ENCODE measurements at regions of chr5 and their contacts with region 1.

Region 1: GRCh38 chr5:96934708-96935558 is 947 bp upstream of the LNPEP start:
- DNase-seq: peak; percentile 97
- H3K4me3 ChIP-seq: peak overlapping the region; percentile 87
- H3K27ac ChIP-seq: peak overlapping the region; percentile 98
- H3K4me1 ChIP-seq: peaks cover 53% of the 10 kb centered on the region
- CTCF ChIP-seq: no peak

Region 2: GRCh38 chr5:96662725-96663513 is 272.0 kb before region 1 on chr5:
- CTCF ChIA-PET with region 1: no interaction called
- POLR2A ChIA-PET with region 1: no interaction called
- intact Hi-C with region 1: loop called (anchors 2 kb)
- DNase-seq: peak; percentile 89
- H3K4me3 ChIP-seq: peak overlapping the region; percentile 80
- H3K27ac ChIP-seq: peak overlapping the region; percentile 88
- H3K4me1 ChIP-seq: peaks cover 23% of the 10 kb centered on the region
- CTCF ChIP-seq: no peak

Region 3: GRCh38 chr5:96868603-96869371 is 66.1 kb before region 1 on chr5:
- CTCF ChIA-PET with region 1: interaction called, 4 read pairs
- POLR2A ChIA-PET with region 1: interaction called, 19 read pairs
- intact Hi-C with region 1: loop called (anchors 1 kb)
- DNase-seq: peak; percentile 90
- H3K4me3 ChIP-seq: no peak overlapping the region
- H3K27ac ChIP-seq: no peak overlapping the region
- H3K4me1 ChIP-seq: peaks cover 47% of the 10 kb centered on the region
- CTCF ChIP-seq: peak; percentile 100

Region 4: DNA sequence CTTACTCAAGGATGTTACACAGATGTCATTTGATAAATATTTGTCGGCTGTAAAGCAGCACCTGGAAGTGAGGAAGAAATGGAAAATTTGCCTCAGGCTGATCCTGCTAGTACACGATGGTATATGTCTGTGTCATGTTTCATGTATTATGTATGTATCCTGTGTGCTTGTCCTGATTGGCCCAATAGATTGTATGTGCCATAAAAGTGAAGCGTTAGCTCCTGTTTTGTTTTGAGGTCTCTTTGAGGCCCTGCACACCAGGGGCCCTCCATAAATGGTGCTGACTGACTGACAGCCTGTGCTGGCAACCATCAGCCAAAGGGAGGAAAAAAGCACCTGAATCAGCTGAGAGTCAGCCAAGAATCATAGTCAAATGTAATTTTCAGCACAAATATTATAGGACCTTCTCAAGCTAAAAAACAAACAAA is 10.9 kb before region 1 on chr5:
- CTCF ChIA-PET with region 1: no interaction called
- POLR2A ChIA-PET with region 1: interaction called, 28 read pairs
- intact Hi-C with region 1: no loop called
- DNase-seq: peak; percentile 39
- H3K4me3 ChIP-seq: no peak overlapping the region
- H3K27ac ChIP-seq: peak overlapping the region; percentile 53
- H3K4me1 ChIP-seq: peaks cover 54% of the 10 kb centered on the region
- CTCF ChIP-seq: no peak

Region 5: GRCh38 chr5:96963267-96963666 is 28.3 kb after region 1 on chr5:
- CTCF ChIA-PET with region 1: interaction called, 3 read pairs
- POLR2A ChIA-PET with region 1: interaction called, 38 read pairs
- intact Hi-C with region 1: loop called (anchors 1 kb)
- DNase-seq: peak; percentile 75
- H3K4me3 ChIP-seq: peak overlapping the region; percentile 82
- H3K27ac ChIP-seq: peak overlapping the region; percentile 98
- H3K4me1 ChIP-seq: peaks cover 48% of the 10 kb centered on the region
- CTCF ChIP-seq: no peak

Region 6: GRCh38 chr5:97037819-97038218 is 102.9 kb after region 1 on chr5:
- CTCF ChIA-PET with region 1: no interaction called
- POLR2A ChIA-PET with region 1: no interaction called
- intact Hi-C with region 1: no loop called
- DNase-seq: no peak
- H3K4me3 ChIP-seq: no peak overlapping the region
- H3K27ac ChIP-seq: no peak overlapping the region
- H3K4me1 ChIP-seq: no peaks in the 10 kb centered on the region
- CTCF ChIP-seq: no peak

Region 7: DNA sequence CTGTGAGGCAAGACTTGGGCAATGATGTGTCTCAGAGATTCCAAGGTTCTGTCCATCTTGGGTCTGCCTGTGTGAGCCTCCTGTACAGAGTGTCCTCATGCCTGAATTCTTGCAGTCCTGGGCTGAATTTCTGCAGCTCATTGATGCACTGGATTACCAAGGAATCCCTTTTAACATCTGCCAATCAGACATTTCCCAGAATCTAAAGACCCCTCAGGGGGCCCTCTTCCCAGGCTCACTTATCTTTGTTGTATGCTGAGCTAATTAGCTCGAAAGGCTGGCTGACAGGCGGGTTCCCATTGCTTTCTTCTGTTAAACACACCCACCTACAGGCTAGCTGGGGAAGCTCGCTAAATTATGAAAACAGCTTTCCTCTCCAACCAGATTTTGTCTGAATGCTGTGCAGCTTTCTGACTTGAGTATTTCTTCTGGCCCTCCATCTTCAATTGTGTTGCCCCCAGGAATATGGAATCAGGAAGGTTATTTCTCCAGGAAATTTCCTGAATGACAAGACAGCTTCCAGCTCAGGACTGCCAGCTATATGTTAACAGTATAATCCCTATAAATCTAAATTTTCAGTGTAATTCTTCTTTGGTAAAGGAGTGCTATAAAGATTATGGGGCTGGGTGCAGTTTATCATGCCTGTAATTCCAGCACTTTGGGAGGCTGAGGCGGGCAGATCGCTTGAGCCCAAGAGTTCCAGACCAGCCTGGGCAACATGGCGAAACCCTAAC is 207.8 kb after region 1 on chr5 and contains the start of gene LIX1:
- CTCF ChIA-PET with region 1: no interaction called
- POLR2A ChIA-PET with region 1: no interaction called
- intact Hi-C with region 1: loop called (anchors 2 kb)
- DNase-seq: peak; percentile 75
- H3K4me3 ChIP-seq: no peak within 1 kb of the TSS
- H3K27ac ChIP-seq: no peak within 1 kb of the TSS
- H3K4me1 ChIP-seq: peaks cover 5% of the 10 kb centered on the region
- CTCF ChIP-seq: peak; percentile 87
- total RNA-seq, gene LIX1: 0.18 and 0.44 TPM in 2 replicates